Transverse colon (tissue), 4 donors: ENCODE measurements at regions of chr3 and their contacts with region 1.

Region 1: DNA sequence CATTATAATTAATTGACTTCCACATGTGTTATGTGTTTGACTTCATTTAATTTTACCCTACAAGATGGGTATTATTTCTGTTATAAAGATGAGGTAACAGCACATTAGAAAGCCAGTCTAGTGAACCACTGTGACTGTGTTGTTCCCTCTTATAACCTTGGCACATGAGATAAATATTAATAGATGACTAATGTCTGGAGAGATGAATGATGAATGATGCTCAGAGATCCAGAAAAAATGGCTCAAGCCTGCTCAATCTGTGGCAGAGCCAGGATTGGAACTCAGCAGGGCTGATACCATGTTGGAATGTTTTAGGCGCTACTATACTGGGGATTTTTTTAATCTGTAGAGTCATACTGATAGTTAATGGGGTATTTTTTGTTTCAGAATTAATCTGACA is 118.8 kb upstream of the PTX3 start:
- DNase-seq: no peak
- H3K4me3 ChIP-seq: no peak overlapping the region
- H3K27ac ChIP-seq: no peak overlapping the region
- H3K4me1 ChIP-seq: no peaks in the 10 kb centered on the region
- H3K27me3 ChIP-seq: no peaks in the 10 kb centered on the region
- CTCF ChIP-seq: no peak
- EP300 ChIP-seq: no peak
- POLR2A ChIP-seq: no peak

Region 2: DNA sequence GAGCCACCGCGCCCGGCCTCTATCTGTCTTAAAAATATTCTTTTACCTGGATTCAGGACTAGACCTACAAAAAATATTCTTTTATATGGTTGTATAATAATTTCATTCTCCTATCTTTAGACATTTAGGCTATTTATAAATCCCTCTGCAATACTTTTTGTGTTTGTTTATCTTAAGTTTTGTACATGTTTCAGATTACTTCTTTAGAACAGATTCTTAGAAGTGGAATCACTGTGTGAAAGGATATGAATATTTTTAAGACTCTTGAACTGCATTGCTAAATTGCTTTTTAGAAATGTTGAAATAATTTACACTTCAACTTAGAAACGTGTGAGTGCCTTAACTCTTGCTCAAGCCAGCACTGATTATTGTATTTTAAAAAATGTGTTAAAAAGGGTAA is 12.5 kb before region 1 on chr3:
- in situ Hi-C with region 1: no loop called
- intact Hi-C with region 1: loop called (anchors 2 kb)
- DNase-seq: no peak
- H3K4me3 ChIP-seq: no peak overlapping the region
- H3K27ac ChIP-seq: no peak overlapping the region
- H3K4me1 ChIP-seq: no peaks in the 10 kb centered on the region
- H3K27me3 ChIP-seq: no peaks in the 10 kb centered on the region
- CTCF ChIP-seq: no peak
- EP300 ChIP-seq: no peak
- POLR2A ChIP-seq: no peak